Naive thymus-derived CD4-positive, alpha-beta T cell (primary cell): ENCODE measurements at regions of chr2 and their contacts with region 1.

Region 1: DNA sequence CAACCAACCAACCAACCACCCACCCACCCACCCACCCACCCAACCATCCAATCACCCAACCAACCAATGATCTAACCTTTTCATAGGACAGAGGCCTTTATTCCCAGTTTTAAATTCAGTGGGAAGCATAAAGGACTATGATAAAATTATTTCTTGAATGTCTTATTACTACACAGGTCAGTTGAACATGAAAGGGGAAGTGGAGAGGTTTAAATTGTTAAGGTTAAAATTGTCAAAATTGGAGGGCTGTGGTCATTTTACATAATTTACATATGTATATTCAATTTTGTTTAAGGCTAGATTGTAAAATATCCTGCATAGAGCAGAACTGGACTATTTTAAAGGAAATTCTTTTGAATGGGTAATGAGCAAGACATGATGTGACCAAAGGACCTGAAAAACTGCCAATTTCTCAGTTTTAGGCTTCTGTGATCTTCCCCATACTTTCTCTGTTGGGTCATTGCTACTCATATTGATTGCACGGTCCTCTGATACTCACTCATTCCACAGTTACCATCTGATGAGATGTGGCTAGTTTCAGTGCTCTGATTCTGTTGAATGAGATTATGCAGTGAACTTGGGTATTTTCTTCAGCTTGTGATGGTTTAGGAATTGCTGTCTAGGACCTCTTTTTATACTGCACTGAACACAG is 127.4 kb downstream of the PLCL1 start:
- DNase-seq: no peak
- ATAC-seq: no peak
- H3K4me3 ChIP-seq: no peak overlapping the region
- H3K4me3 Mint-ChIP-seq: no peak overlapping the region
- H3K27ac ChIP-seq: no peak overlapping the region
- H3K27ac Mint-ChIP-seq: peak overlapping the region in 1 of 9 donors; percentile 49
- H3K4me1 ChIP-seq: peaks cover 0 to 16% of the 10 kb centered on the region in 2 donors
- H3K4me1 Mint-ChIP-seq: peaks cover 21 to 89% (median 76%) of the 10 kb centered on the region in 7 donors
- H3K27me3 ChIP-seq: no peaks in the 10 kb centered on the region
- H3K27me3 Mint-ChIP-seq: peaks cover 0 to 1% (median 0%) of the 10 kb centered on the region in 5 donors

Region 2: GRCh38 chr2:197835293-197835692 is 96.5 kb before region 1 on chr2:
- CTCF ChIA-PET with region 1: no interaction called
- POLR2A ChIA-PET with region 1: no interaction called
- intact Hi-C with region 1: no loop called
- DNase-seq: no peak
- ATAC-seq: no peak
- H3K4me3 ChIP-seq: no peak overlapping the region
- H3K4me3 Mint-ChIP-seq: no peak overlapping the region
- H3K27ac ChIP-seq: no peak overlapping the region
- H3K27ac Mint-ChIP-seq: peak overlapping the region in 6 of 9 donors; percentile 2 to 81 (median 60)
- H3K4me1 ChIP-seq: peaks cover 0 to 31% of the 10 kb centered on the region in 2 donors
- H3K4me1 Mint-ChIP-seq: peaks cover 18 to 71% (median 48%) of the 10 kb centered on the region in 7 donors
- H3K27me3 ChIP-seq: no peaks in the 10 kb centered on the region
- H3K27me3 Mint-ChIP-seq: no peaks in the 10 kb centered on the region

Region 3: GRCh38 chr2:197908990-197909776 is 22.6 kb before region 1 on chr2:
- CTCF ChIA-PET with region 1: no interaction called
- POLR2A ChIA-PET with region 1: interaction called, 3 read pairs
- intact Hi-C with region 1: loop called in 1 of 2 experiments (anchors 2 kb)
- DNase-seq: no peak
- ATAC-seq: no peak
- H3K4me3 ChIP-seq: no peak overlapping the region
- H3K4me3 Mint-ChIP-seq: no peak overlapping the region
- H3K27ac ChIP-seq: no peak overlapping the region
- H3K27ac Mint-ChIP-seq: peak overlapping the region in 1 of 9 donors; percentile 18
- H3K4me1 ChIP-seq: peaks cover 0 to 12% of the 10 kb centered on the region in 2 donors
- H3K4me1 Mint-ChIP-seq: peaks cover 4 to 77% (median 59%) of the 10 kb centered on the region in 7 donors
- H3K27me3 ChIP-seq: no peaks in the 10 kb centered on the region
- H3K27me3 Mint-ChIP-seq: peaks cover 0 to 48% (median 0%) of the 10 kb centered on the region in 5 donors

Region 4: DNA sequence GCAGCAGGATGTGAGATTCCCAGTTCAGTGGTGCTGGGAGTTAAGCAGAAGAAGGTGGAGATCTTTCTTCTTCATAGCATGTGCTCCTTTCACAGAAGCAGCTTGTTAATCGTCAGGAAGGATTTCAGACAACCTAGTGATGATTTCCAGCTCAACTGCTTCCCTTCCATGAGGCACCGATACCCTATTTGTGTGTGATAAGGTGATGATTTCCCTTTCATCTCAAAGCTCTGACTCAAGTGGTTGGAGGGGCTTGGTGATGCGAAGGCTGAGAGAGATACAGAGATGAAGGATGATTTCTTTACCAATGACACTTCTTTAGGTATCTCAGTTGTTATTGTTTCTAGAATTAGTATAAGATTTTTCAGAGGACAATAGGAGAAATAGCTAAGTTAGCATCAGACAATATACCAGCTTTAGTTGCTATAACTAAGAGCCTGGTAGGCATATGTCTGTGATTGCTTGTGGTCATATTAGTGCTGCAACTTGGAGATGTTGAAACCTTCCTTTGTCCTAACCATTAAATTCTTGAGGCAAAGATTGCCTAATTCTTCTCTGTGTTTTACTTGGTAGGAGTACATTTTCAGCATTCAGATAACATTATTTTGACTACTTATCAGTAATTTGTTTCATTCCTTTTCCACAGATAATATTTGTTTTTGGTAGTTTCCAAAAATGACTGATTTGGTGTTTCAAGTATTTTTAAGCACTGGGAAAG is 16.1 kb before region 1 on chr2:
- CTCF ChIA-PET with region 1: no interaction called
- POLR2A ChIA-PET with region 1: no interaction called
- intact Hi-C with region 1: loop called in 1 of 2 experiments (anchors 2 kb)
- DNase-seq: no peak
- ATAC-seq: no peak
- H3K4me3 ChIP-seq: no peak overlapping the region
- H3K4me3 Mint-ChIP-seq: peak overlapping the region in 4 of 10 donors; percentile 2 to 31 (median 20)
- H3K27ac ChIP-seq: no peak overlapping the region
- H3K27ac Mint-ChIP-seq: peak overlapping the region in 3 of 9 donors; percentile 16 to 72 (median 59)
- H3K4me1 ChIP-seq: peaks cover 0 to 15% of the 10 kb centered on the region in 2 donors
- H3K4me1 Mint-ChIP-seq: peaks cover 4 to 71% (median 43%) of the 10 kb centered on the region in 7 donors
- H3K27me3 ChIP-seq: no peaks in the 10 kb centered on the region
- H3K27me3 Mint-ChIP-seq: peaks cover 0 to 19% (median 0%) of the 10 kb centered on the region in 5 donors

Region 5: GRCh38 chr2:197954328-197954727 is 22.5 kb after region 1 on chr2:
- CTCF ChIA-PET with region 1: no interaction called
- POLR2A ChIA-PET with region 1: no interaction called
- intact Hi-C with region 1: loop called in 1 of 2 experiments (anchors 2 kb)
- DNase-seq: peak in 7 of 9 donors; percentile 47 to 82 (median 72)
- ATAC-seq: peak; percentile 89
- H3K4me3 ChIP-seq: no peak overlapping the region
- H3K4me3 Mint-ChIP-seq: peak overlapping the region in 9 of 10 donors; percentile 22 to 76 (median 53)
- H3K27ac ChIP-seq: peak overlapping the region; percentile 50
- H3K27ac Mint-ChIP-seq: peak overlapping the region in 8 of 9 donors; percentile 76 to 97 (median 89)
- H3K4me1 ChIP-seq: peaks cover 0 to 20% of the 10 kb centered on the region in 2 donors
- H3K4me1 Mint-ChIP-seq: peaks cover 11 to 97% (median 92%) of the 10 kb centered on the region in 7 donors
- H3K27me3 ChIP-seq: no peaks in the 10 kb centered on the region
- H3K27me3 Mint-ChIP-seq: no peaks in the 10 kb centered on the region